WTC11 (cell line): ENCODE measurements at regions of chr1 and their contacts with region 1.

Region 1: GRCh38 chr1:167533851-167534300 is 15.5 kb upstream of the CD247 start:
- DNase-seq: peak; percentile 86
- ATAC-seq: peak; percentile 89
- H3K4me3 Mint-ChIP-seq: no peak overlapping the region
- H3K27ac Mint-ChIP-seq: no peak overlapping the region
- H3K4me1 Mint-ChIP-seq: peaks cover 9% of the 10 kb centered on the region
- H3K27me3 Mint-ChIP-seq: no peaks in the 10 kb centered on the region
- CTCF ChIP-seq: peak; percentile 83

Region 2: DNA sequence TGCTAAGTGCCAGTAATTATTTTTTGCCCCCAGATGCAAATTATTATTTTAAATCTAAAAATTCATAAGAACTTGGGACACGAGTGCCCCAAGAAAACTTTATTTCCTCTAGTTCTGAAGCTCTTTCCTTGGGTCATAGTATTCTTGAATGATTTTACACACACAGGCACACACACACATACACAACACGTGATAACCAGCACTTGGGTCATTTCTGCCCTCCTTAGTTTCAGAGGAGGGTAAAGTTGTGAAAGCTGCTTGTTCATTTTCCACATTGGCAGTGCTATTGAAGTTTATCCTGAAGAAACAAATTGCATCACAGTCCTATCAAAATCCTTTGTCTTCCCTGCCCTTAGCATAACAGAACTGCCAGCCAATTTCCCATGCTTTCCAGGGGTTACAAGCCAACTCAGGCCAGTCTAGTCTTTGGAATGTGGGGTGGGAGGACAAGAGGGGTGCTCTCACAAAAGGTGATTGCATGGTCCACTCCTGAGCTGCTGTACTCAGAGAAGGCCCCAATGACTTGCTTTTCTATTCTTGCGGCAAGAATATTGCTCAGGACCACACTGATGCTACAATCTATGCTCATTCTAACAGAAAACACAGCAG is 793.1 kb before region 1 on chr1:
- CTCF ChIA-PET with region 1: no interaction called
- POLR2A ChIA-PET with region 1: no interaction called
- DNase-seq: no peak
- ATAC-seq: peak; percentile 78
- H3K4me3 Mint-ChIP-seq: no peak overlapping the region
- H3K27ac Mint-ChIP-seq: no peak overlapping the region
- H3K4me1 Mint-ChIP-seq: peaks cover 5% of the 10 kb centered on the region; the same call in 1 of the 2 replicates
- H3K27me3 Mint-ChIP-seq: no peaks in the 10 kb centered on the region
- CTCF ChIP-seq: no peak

Region 3: DNA sequence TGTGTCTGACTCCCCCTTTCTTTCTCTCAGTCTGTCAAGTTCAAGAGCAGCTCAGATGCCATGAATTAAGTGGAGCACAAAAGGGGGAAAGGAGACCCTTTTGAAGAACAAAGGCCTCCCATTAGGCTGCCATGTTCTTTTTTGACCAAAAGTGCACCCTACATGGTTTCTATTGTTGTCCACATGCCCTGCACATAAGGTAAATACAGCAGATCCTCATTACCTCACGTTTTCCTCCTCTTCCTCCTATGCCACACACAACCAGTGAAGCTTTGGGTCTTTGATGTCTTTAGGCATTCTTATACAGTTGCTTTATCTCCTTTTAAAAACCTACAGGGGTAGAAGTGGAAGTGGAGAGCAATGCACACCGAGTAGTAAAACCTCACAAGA is 265.5 kb before region 1 on chr1:
- CTCF ChIA-PET with region 1: interaction called, 11 read pairs
- POLR2A ChIA-PET with region 1: no interaction called
- DNase-seq: no peak
- ATAC-seq: no peak
- H3K4me3 Mint-ChIP-seq: peak overlapping the region; percentile 12; the same call in 1 of the 2 replicates
- H3K27ac Mint-ChIP-seq: peak overlapping the region; percentile 71
- H3K4me1 Mint-ChIP-seq: peaks cover 51% of the 10 kb centered on the region
- H3K27me3 Mint-ChIP-seq: no peaks in the 10 kb centered on the region
- CTCF ChIP-seq: no peak

Region 4: DNA sequence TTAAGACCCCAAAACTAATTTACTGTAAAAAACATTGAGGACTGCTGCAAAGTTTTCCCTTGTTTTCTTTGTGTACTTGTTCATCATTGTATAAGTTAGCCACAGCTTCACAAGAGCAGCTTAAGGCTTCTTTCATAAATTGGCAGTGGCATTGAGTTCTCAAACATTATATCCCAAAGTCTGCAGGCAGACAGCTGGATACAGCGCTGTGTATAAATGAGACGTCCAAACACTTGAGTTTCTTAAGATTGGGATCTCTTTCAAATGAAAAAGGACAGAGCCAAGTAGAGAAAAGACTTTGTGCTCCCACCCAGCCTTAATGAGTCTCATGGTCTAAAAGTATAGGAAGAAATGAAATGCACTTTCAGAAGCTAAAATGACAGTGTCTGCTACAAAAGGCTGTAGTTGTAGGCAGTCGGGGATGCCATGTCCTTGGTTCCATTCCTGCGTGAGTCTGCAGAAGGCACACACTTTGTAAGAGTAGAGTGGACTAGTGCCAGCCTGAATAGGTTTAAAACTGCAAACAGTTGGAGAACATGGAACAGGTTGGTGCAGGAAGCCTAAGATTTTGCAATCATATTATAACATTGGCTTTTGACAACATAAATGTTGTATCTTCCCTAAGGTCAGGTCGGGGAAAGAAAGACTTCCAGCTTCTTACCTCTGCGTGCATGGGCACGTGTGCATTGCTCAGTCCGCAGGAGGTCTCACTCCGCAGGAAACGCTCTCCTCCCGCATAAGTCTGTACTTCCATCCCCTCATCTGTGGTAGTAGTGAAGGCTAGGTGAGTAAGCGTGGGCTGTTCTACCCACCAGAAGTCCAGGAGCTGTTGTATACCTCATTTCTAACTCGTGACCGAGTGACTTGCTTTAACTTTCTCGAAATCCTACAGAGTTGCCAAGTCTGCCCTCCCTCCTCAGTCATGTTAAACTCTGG is 109.9 kb before region 1 on chr1:
- CTCF ChIA-PET with region 1: interaction called, 10 read pairs
- POLR2A ChIA-PET with region 1: no interaction called
- DNase-seq: no peak
- ATAC-seq: peak; percentile 14; the same call in 1 of the 2 replicates
- H3K4me3 Mint-ChIP-seq: no peak overlapping the region
- H3K27ac Mint-ChIP-seq: no peak overlapping the region; the same call in 1 of the 2 replicates
- H3K4me1 Mint-ChIP-seq: peaks cover 66% of the 10 kb centered on the region
- H3K27me3 Mint-ChIP-seq: no peaks in the 10 kb centered on the region; the same call in 1 of the 2 replicates
- CTCF ChIP-seq: no peak

Region 5: DNA sequence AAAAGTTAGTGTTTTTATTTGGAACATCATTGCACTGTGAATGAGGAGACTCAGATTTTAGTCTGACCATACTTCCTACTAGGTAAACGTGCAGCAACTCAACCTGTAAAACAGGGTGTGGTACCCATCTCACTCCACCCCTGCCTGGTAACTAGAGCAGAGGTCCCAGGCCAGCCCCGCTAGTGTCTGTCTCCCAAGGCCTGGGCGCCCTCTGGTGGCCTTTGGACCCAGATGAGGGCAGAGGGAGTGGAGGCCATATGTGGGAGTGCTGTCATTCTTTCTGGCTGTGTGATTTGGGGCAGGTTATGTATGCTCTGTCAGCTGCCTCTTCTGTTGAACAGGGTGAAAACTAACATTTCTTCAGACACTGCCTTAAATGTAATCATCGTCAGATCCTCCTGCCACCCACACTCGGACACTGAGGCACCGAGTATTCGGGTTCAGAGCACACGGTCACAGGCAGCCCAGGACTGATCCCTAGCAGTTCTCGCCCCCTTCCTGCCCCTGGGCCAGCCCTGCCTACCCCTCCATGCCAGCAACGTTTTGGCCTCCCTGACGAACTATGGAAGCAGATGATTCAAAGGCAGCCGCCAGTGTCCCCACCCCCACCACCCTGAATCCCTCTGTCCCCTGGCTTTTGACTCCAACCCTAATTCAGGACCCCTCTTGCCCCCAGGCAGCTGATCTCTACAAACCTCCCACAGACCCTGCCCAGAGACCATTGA is 91.6 kb before region 1 on chr1:
- CTCF ChIA-PET with region 1: interaction called, 21 read pairs
- POLR2A ChIA-PET with region 1: no interaction called
- DNase-seq: peak; percentile 93
- ATAC-seq: peak; percentile 88
- H3K4me3 Mint-ChIP-seq: no peak overlapping the region
- H3K27ac Mint-ChIP-seq: no peak overlapping the region
- H3K4me1 Mint-ChIP-seq: peaks cover 18% of the 10 kb centered on the region
- H3K27me3 Mint-ChIP-seq: peaks cover 44% of the 10 kb centered on the region
- CTCF ChIP-seq: peak; percentile 76

Region 6: DNA sequence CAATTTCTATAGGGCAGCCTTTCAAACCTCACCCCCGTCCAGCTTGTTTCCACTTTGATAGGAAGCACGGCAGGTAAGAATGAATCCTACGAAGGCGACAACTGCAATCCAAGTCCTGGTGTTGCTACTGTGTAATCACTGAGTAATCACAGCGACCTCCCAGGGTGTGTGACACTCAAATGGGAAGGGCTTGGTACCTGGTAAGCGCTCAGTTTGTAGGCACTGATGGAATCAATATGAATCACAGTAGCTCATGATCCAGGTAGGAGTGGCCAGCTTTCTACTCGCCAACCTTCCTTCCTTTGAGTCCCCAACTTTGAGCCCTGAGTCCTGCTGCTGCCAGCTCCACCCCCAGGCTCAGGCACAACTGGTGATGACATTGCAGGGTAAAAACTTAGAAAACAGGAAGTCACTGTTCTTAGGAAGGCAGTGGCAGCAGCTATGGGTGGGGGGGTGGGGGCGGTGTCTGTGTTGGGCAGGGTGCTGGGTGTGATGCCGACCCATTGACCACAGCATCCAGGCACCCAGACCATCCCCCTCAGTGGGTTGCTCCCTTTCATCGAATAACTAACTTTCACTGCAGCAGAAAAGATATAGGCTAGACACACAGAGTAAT is 86.2 kb before region 1 on chr1:
- CTCF ChIA-PET with region 1: interaction called, 21 read pairs
- POLR2A ChIA-PET with region 1: no interaction called
- DNase-seq: no peak
- ATAC-seq: peak; percentile 73
- H3K4me3 Mint-ChIP-seq: no peak overlapping the region
- H3K27ac Mint-ChIP-seq: no peak overlapping the region
- H3K4me1 Mint-ChIP-seq: peaks cover 9% of the 10 kb centered on the region
- H3K27me3 Mint-ChIP-seq: peaks cover 6% of the 10 kb centered on the region
- CTCF ChIP-seq: no peak

Region 7: GRCh38 chr1:167454894-167455785 is 78.7 kb before region 1 on chr1:
- CTCF ChIA-PET with region 1: interaction called, 33 read pairs
- POLR2A ChIA-PET with region 1: no interaction called
- DNase-seq: peak; percentile 57
- ATAC-seq: peak; percentile 54
- H3K4me3 Mint-ChIP-seq: peak overlapping the region; percentile 64
- H3K27ac Mint-ChIP-seq: no peak overlapping the region
- H3K4me1 Mint-ChIP-seq: peaks cover 24% of the 10 kb centered on the region
- H3K27me3 Mint-ChIP-seq: peaks cover 46% of the 10 kb centered on the region
- CTCF ChIP-seq: no peak

Region 8: DNA sequence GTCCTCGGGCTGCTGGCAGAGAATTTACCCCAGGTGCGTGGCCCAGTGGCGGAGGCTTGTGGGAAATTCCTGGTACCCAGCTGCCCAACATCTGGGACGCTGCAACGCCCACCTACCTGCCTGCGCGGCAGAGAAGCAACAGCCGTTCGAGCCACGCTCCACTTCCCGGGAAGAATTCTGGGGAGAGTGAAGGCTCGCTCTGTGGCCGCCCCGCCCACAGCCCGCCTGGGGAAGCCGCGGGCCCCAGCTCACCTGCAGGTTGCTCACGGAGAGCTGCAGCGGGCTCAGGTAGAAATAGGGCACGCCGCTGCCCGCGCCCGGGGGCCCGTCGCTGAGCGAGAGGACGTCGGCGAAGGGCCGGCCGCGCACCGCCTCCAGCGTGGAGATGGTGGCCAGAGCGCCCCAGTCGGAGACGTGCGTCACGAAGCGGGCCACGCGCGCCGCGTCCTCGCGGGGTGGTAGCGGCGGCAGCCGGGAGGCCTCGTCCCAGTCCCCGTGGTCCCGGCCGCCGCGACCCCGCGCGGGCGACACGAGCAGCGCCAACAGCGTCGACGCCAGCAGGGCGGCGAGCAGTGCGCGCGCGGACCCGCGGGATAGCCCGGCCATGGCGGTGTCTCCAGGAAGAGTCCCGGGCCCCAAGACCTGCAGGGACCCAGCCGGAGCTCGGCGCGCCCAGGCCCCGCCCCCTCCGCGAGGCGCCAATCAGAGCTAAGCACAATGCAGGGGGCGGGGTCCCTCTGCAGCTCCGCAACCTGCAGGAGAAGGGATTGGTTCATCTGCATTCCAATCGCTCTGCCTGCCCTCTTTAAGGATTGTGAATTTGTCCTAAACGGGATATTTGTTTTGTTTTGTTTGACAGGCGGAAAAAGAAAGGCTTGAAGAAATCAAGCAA is 19.5 kb after region 1 on chr1 and contains the start of gene CREG1:
- CTCF ChIA-PET with region 1: interaction called, 73 read pairs
- POLR2A ChIA-PET with region 1: interaction called, 3 read pairs
- DNase-seq: peak; percentile 96
- ATAC-seq: peak; percentile 98
- H3K4me3 Mint-ChIP-seq: peak within 1 kb of the TSS; percentile 87
- H3K27ac Mint-ChIP-seq: no peak within 1 kb of the TSS; the same call in 1 of the 2 replicates
- H3K4me1 Mint-ChIP-seq: peaks cover 26% of the 10 kb centered on the region; the same call in 1 of the 2 replicates
- H3K27me3 Mint-ChIP-seq: peaks cover 10% of the 10 kb centered on the region
- CTCF ChIP-seq: no peak
- total RNA-seq, gene CREG1: 21.0 to 24.7 TPM (median 21.7 TPM) in 3 replicates